ENCODE measurements at regions of chr3 and their contacts with region 1.

Region 1: GRCh38 chr3:154708554-154708953 is 278.6 kb upstream of the GPR149 start:
- DNase-seq: no peak
- H3K4me3 ChIP-seq: no peak overlapping the region
- H3K27ac ChIP-seq: no peak overlapping the region
- H3K4me1 ChIP-seq: no peaks in the 10 kb centered on the region
- H3K27me3 ChIP-seq: no peaks in the 10 kb centered on the region
- CTCF ChIP-seq: no peak
- POLR2A ChIP-seq: no peak

Region 2: GRCh38 chr3:155804323-155804722 is 1095.8 kb after region 1 on chr3:
- intact Hi-C with region 1: loop called (anchors 5 kb)
- DNase-seq: no peak
- H3K4me3 ChIP-seq: no peak overlapping the region
- H3K27ac ChIP-seq: no peak overlapping the region
- H3K4me1 ChIP-seq: no peaks in the 10 kb centered on the region
- H3K27me3 ChIP-seq: no peaks in the 10 kb centered on the region
- CTCF ChIP-seq: no peak
- POLR2A ChIP-seq: no peak

Measured in breast epithelium (tissue), 4 donors.